Adrenal gland (tissue), 19 donors: ENCODE measurements at regions of chr22 and their contacts with region 1.

Region 1: DNA sequence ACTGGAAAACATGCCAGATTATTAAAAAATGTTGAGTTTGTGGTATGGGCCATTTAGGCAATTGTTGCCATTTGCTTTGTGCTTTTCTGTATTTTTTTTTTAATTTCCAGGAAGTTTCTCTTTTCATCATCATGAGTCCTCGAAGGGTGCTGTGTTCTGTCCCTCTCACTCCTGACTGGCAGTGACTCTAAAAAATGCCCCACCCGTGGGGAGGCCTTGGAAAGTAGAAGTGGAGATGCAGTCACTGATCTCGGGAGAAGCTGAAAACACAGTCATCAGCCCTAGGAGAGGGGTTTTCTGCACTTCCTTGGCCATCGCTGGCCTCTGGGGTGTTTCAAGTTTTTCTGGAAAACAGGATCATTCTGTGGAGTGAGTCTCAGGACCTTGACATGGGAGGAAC is 98.5 kb upstream of the GRK3 start:
- DNase-seq: no peak
- H3K4me3 ChIP-seq: no peak overlapping the region
- H3K27ac ChIP-seq: no peak overlapping the region
- H3K4me1 ChIP-seq: peaks cover 0 to 5% of the 10 kb centered on the region in 2 donors
- H3K27me3 ChIP-seq: no peaks in the 10 kb centered on the region
- CTCF ChIP-seq: no peak
- POLR2A ChIP-seq: no peak

Region 2: GRCh38 chr22:24951942-24952836 is 513.8 kb before region 1 on chr22 and contains the start of gene KIAA1671:
- intact Hi-C with region 1: no loop called
- DNase-seq: peak; percentile 89 to 94 (median 92)
- H3K4me3 ChIP-seq: peak within 1 kb of the TSS; percentile 47 to 92 (median 68)
- H3K27ac ChIP-seq: peak within 1 kb of the TSS; percentile 85 to 96 (median 87)
- H3K4me1 ChIP-seq: peaks cover 23 to 24% of the 10 kb centered on the region in 2 donors
- H3K27me3 ChIP-seq: no peaks in the 10 kb centered on the region
- CTCF ChIP-seq: peak; percentile 94 to 99 (median 98)
- POLR2A ChIP-seq: peak; percentile 66 to 82
- total RNA-seq, gene KIAA1671: 8.7 to 71.0 (median 51.1) TPM

Region 3: DNA sequence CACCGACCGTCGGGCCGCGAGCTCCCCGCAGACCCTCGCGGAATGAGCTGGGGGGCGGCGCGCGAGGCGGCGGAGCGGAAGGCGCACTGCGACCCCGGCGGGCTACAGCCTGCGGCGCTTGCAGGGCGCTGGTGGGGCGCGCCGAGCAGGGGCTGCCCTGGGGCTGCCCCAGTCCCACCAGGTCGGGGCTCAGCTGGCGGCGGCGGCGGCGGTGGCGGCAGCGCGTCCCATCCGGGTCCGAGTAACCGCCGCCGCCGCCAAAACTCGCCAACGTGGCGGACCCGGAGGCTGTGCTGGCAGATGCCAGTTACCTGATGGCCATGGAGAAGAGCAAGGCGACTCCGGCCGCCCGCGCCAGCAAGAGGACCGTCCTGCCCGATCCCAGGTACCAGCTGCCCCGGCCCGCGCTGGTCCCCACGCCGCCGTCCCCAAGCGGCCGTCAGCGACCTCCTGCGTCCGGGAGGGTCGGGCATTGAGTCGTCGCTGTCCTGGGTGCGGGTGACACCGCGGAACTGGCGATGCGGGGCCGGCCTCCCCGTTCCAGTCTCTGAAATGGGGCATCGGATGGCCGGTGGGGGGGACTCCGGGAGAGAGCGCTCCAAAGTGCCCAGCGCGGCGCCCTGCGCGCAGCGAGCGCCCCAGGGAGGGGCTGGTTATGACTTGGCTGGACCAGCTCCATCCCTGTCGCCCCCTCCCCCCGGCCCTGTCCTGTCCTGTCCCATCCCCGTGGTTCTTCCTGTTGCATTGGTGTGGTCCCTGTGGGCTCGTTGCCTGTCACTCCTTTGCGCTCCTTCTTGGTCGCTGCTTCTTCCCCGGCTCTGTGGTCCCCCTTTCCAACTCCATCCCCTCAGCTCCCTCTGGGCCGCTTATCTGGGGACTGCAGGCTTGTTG is 183.0 kb before region 1 on chr22:
- intact Hi-C with region 1: no loop called
- DNase-seq: no peak
- H3K4me3 ChIP-seq: no peak overlapping the region
- H3K27ac ChIP-seq: no peak overlapping the region
- H3K4me1 ChIP-seq: no peaks in the 10 kb centered on the region
- H3K27me3 ChIP-seq: peaks cover 41% of the 10 kb centered on the region
- CTCF ChIP-seq: no peak
- POLR2A ChIP-seq: no peak

Region 4: GRCh38 chr22:25350551-25350971 is 115.4 kb before region 1 on chr22:
- intact Hi-C with region 1: no loop called
- DNase-seq: peak in 3 of 7 donors; percentile 5 to 24 (median 9)
- H3K4me3 ChIP-seq: no peak overlapping the region
- H3K27ac ChIP-seq: no peak overlapping the region
- H3K4me1 ChIP-seq: no peaks in the 10 kb centered on the region
- H3K27me3 ChIP-seq: no peaks in the 10 kb centered on the region
- CTCF ChIP-seq: no peak
- POLR2A ChIP-seq: no peak

Region 5: DNA sequence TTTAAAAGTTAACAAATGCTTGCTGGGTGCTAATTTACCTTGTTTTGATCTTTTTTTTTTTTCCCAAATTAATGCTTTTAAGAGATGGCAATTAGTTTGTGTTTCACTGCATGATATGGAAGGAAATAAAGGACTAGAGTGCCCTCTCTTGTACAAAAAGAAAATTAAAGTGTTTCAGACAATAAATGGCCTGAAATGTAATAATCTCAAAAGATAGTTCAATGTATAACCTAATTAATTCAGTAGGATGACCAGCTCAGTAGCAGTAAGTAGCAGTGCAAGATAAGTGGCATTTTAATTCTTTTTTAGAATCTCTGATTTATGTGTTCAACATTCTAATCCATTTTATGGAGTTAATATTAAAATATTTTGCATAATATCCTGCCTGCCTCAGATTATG is 236.1 kb after region 1 on chr22:
- intact Hi-C with region 1: loop called (anchors 2 to 5 kb)
- DNase-seq: no peak
- H3K4me3 ChIP-seq: no peak overlapping the region
- H3K27ac ChIP-seq: no peak overlapping the region
- H3K4me1 ChIP-seq: peaks cover 0 to 12% of the 10 kb centered on the region in 2 donors
- H3K27me3 ChIP-seq: no peaks in the 10 kb centered on the region
- CTCF ChIP-seq: peak; percentile 27 to 75 (median 58)
- POLR2A ChIP-seq: no peak

Region 6: DNA sequence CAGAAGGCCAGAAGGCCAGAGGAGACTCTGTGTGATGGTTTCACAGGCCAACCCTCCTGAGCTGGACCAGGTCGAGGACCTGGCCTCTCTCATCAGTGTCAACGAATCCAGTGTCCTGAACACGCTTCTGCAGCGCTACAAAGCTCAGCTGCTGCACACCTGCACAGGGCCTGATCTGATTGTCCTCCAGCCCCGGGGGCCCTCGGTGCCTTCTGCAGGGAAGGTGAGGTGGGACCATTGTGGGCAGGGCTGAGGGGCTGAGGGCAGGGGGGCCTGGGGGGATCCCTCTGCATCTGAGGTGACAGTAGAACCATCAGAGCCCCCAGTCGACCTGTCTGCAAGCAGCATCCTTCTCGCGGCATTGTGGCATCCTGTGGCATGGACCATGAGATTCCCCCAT is 306.3 kb after region 1 on chr22:
- intact Hi-C with region 1: loop called (anchors 2 to 5 kb)
- DNase-seq: no peak
- H3K4me3 ChIP-seq: no peak overlapping the region
- H3K27ac ChIP-seq: no peak overlapping the region
- H3K4me1 ChIP-seq: no peaks in the 10 kb centered on the region
- H3K27me3 ChIP-seq: no peaks in the 10 kb centered on the region
- CTCF ChIP-seq: no peak
- POLR2A ChIP-seq: no peak

Region 7: GRCh38 chr22:25777870-25778269 is 311.9 kb after region 1 on chr22:
- intact Hi-C with region 1: loop called (anchors 2 to 5 kb)
- DNase-seq: peak in 4 of 7 donors; percentile 29 to 69 (median 44)
- H3K4me3 ChIP-seq: no peak overlapping the region
- H3K27ac ChIP-seq: no peak overlapping the region
- H3K4me1 ChIP-seq: no peaks in the 10 kb centered on the region
- H3K27me3 ChIP-seq: no peaks in the 10 kb centered on the region
- CTCF ChIP-seq: peak in 5 of 6 experiments; percentile 25 to 48 (median 32)
- POLR2A ChIP-seq: no peak